ENCODE measurements at regions of chr12 and their contacts with region 1.

Region 1: DNA sequence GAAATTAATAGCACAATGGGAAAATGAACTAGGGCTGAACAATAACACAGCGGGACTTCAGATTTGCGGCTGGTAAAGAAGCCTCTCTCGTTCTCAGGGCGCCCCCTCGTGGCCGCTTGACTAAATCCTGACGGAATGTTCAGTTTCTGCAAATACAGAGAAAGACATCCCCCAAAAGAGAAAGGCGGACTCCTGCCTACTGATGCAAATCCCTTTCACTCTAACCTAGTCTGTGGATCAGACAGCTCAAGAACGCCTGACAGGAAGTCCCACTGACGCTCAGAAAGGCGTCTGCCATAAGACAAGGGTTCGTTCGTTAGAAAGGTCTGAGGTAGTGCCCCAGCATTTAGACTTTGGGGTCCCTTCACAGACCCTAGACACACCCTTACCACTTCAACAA is 2.5 kb downstream of the NUAK1 start:
- DNase-seq: peak in 1 of 2 donors; percentile 93
- H3K4me3 ChIP-seq: peak overlapping the region; percentile 87 to 95
- H3K27ac ChIP-seq: peak overlapping the region; percentile 98 to 99
- H3K4me1 ChIP-seq: peaks cover 5 to 43% of the 10 kb centered on the region in 2 donors
- H3K27me3 ChIP-seq: no peaks in the 10 kb centered on the region
- CTCF ChIP-seq: peak; percentile 76 to 86 (median 79)

Region 2: DNA sequence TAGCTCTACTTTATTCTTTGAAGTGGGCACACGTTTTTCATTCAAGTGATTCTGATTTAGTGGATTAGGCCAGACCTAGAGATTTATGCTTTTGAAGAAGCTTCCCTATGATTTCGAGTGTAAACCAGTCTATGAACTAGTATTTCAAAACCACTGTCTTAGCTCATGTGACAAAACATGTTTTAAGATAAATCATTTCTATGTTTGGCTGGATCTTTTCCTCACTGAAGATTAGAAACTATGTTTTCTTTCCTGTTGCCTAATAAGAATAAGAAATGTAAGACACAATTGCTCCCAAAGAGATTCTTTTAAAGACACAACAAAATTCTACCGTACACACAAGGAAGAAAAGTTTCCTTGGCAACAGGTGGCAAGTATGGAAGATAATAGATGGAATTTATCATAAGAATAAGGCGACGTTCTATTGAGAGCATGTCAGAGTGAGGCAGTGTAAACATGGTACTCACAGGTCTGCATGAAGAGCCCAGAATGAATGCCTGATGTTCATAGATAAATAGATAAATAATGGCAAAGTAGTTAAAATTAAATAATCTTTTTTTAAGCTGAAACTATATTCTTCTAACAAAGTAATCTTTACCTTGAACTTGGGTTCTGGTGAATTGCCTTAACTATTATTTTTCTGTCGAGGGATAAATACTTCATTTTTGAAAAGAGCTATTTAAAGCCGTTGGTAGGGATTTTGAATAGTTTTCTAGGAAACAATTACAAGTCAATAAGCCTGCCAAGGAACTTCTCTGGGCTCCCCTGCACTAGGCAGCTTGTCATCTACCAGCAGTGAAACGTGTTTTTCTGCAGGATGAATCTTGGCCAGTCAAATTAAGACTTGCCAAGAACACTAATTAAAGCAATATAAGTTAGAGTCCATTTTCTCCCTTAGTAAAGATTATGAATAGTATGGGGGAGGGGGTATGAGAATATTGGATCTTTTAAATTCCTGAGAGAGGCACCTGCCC is 839.9 kb before region 1 on chr12:
- intact Hi-C with region 1: no loop called
- DNase-seq: no peak
- H3K4me3 ChIP-seq: no peak overlapping the region
- H3K27ac ChIP-seq: no peak overlapping the region
- H3K4me1 ChIP-seq: peaks cover 0 to 8% of the 10 kb centered on the region in 2 donors
- H3K27me3 ChIP-seq: no peaks in the 10 kb centered on the region
- CTCF ChIP-seq: no peak

Region 3: GRCh38 chr12:105420659-105421240 is 715.5 kb before region 1 on chr12:
- intact Hi-C with region 1: loop called (anchors 1 kb)
- DNase-seq: peak in 1 of 2 donors; percentile 84
- H3K4me3 ChIP-seq: no peak overlapping the region
- H3K27ac ChIP-seq: no peak overlapping the region
- H3K4me1 ChIP-seq: no peaks in the 10 kb centered on the region
- H3K27me3 ChIP-seq: no peaks in the 10 kb centered on the region
- CTCF ChIP-seq: peak; percentile 77 to 91 (median 85)

Region 4: GRCh38 chr12:105562199-105562971 is 573.9 kb before region 1 on chr12:
- intact Hi-C with region 1: loop called (anchors 5 kb)
- DNase-seq: peak; percentile 28 to 82
- H3K4me3 ChIP-seq: peak overlapping the region in 1 of 2 donors; percentile 38
- H3K27ac ChIP-seq: peak overlapping the region; percentile 52 to 75
- H3K4me1 ChIP-seq: peaks cover 0 to 10% of the 10 kb centered on the region in 2 donors
- H3K27me3 ChIP-seq: no peaks in the 10 kb centered on the region
- CTCF ChIP-seq: no peak

Region 5: DNA sequence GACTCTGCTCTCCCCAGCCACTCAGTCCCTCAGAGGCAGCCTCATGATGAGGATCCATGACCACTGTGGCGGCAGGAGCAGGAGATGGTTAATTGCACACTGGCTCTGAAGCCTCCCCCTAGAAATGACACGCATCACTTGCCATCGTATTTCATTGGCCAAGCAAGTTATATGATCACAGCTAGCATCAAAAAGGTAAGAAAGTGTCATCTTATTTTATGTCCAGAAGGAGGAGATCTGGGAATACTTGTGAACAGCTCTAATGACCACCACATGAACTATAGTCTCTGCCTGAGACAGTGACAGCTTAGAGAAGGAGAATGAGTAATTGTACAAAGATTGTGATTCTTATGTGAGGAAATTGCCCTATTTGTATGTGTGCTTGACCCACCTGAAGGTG is 360.9 kb before region 1 on chr12:
- intact Hi-C with region 1: loop called (anchors 2 kb)
- DNase-seq: no peak
- H3K4me3 ChIP-seq: no peak overlapping the region
- H3K27ac ChIP-seq: no peak overlapping the region
- H3K4me1 ChIP-seq: peaks cover 8 to 11% of the 10 kb centered on the region in 2 donors
- H3K27me3 ChIP-seq: no peaks in the 10 kb centered on the region
- CTCF ChIP-seq: no peak

Region 6: DNA sequence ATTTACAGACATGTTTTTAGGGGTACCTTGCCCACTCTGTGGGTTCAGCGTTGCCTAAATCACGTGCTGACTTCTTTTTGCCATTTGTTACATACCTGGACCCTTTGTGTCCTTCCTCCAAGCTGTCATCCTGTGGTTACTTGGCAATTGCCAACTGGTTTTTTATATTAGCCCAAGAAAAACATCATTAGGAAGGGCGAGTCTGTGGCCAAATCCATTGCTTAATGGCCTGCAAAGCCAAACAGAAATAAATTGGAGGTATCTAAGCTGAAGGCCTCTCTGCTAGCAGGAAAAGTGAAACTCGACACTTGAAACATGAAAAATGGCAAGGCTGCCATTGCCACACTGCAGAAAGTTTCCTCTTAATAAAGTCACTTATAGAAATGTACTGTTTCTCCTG is 187.9 kb before region 1 on chr12:
- intact Hi-C with region 1: loop called (anchors 5 kb)
- DNase-seq: peak in 1 of 2 donors; percentile 78
- H3K4me3 ChIP-seq: no peak overlapping the region
- H3K27ac ChIP-seq: peak overlapping the region; percentile 79 to 86
- H3K4me1 ChIP-seq: peaks cover 6 to 15% of the 10 kb centered on the region in 2 donors
- H3K27me3 ChIP-seq: no peaks in the 10 kb centered on the region
- CTCF ChIP-seq: no peak

Region 7: GRCh38 chr12:106022568-106023012 is 113.7 kb before region 1 on chr12:
- intact Hi-C with region 1: loop called (anchors 5 kb)
- DNase-seq: no peak
- H3K4me3 ChIP-seq: no peak overlapping the region
- H3K27ac ChIP-seq: no peak overlapping the region
- H3K4me1 ChIP-seq: peaks cover 0 to 12% of the 10 kb centered on the region in 2 donors
- H3K27me3 ChIP-seq: no peaks in the 10 kb centered on the region
- CTCF ChIP-seq: no peak

Region 8: DNA sequence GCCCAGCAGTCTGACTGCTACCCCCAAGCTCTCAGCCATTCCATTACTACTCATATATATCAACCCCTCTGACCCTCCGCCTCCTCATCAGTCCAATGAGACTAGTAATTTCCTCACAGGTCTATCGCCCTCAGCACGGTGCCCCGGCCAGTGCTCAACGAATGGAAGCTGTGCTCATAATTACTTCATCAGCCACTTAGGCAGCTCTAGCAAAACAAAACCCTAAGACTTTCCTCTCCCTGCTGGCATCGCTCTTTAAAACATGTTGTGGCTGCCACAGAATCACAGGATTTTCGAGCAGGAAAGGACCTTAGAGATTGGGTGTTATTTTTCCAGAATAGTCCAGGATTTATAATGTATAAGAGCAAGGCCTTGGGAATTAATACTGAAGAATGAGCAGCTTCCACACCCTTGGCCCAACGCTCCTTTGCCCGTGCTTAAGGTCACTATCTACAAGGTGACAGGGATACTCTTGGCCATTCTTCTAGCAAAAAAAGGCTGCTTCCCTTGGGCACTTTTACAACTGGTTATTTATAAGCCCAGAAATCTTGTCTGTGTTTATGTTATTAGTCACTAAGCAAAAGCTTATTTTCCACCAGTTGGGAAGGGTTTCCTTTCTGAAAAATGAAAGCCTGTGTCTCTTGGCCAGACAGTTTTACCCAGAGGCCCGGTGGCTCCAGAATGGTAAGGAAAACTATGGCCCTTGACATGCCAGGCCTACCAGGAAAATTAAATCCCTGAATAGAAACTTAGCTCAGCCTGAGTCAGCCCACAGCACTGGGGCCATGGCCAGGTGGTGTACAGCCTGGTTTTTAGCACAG is 45.5 kb before region 1 on chr12:
- intact Hi-C with region 1: loop called (anchors 2 kb)
- DNase-seq: peak; percentile 77 to 93
- H3K4me3 ChIP-seq: peak overlapping the region in 1 of 2 donors; percentile 15
- H3K27ac ChIP-seq: peak overlapping the region; percentile 87 to 92
- H3K4me1 ChIP-seq: peaks cover 18 to 65% of the 10 kb centered on the region in 2 donors
- H3K27me3 ChIP-seq: no peaks in the 10 kb centered on the region
- CTCF ChIP-seq: no peak

Region 9: GRCh38 chr12:106179086-106179485 is 42.8 kb after region 1 on chr12:
- intact Hi-C with region 1: no loop called
- DNase-seq: no peak
- H3K4me3 ChIP-seq: no peak overlapping the region
- H3K27ac ChIP-seq: no peak overlapping the region
- H3K4me1 ChIP-seq: no peaks in the 10 kb centered on the region
- H3K27me3 ChIP-seq: no peaks in the 10 kb centered on the region
- CTCF ChIP-seq: no peak

Region 10: DNA sequence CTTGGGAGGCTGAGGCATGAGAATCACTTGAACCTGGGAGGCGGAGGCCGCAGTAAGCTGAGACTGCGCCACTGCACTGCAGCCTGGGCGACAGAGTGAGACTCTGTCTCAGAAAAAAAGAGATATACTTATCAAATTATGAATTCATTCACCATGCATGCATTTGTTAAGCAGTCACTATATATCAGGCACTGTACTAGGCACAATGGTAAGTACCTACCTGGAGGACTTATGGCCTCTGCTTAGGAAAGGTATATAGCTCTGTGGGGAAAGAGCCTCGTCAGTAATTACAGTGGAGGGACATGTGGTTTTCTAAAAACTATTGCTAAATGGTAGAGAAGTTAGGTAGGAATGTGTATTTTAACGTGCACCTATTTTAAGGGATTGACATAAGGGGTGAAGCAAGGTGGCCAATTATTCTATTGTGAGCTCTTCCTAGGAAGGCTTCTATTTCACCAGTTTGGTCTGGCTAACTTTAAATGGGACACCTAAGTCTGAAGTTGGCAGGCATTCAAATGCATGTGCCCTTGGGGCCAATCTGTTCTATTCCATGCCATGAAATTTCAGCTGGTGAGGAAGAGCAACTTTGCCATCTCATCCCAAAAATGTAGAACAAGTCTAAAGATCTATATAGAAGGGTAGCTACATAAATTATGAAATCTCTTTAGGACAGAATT is 181.3 kb after region 1 on chr12:
- intact Hi-C with region 1: no loop called
- DNase-seq: no peak
- H3K4me3 ChIP-seq: no peak overlapping the region
- H3K27ac ChIP-seq: no peak overlapping the region
- H3K4me1 ChIP-seq: no peaks in the 10 kb centered on the region
- H3K27me3 ChIP-seq: no peaks in the 10 kb centered on the region
- CTCF ChIP-seq: no peak

Region 11: GRCh38 chr12:106986625-106987430 is 850.6 kb after region 1 on chr12 and contains the start of gene MTERF2:
- intact Hi-C with region 1: no loop called
- DNase-seq: peak; percentile 71 to 97
- H3K4me3 ChIP-seq: peak within 1 kb of the TSS; percentile 69 to 77
- H3K27ac ChIP-seq: peak within 1 kb of the TSS; percentile 91 to 93
- H3K4me1 ChIP-seq: peaks cover 12 to 16% of the 10 kb centered on the region in 2 donors
- H3K27me3 ChIP-seq: no peaks in the 10 kb centered on the region
- CTCF ChIP-seq: no peak
- total RNA-seq, gene MTERF2: 3.1 TPM

Measured in ascending aorta (tissue), 2 donors.